ENCODE measurements at regions of chr22 and their contacts with region 1.

Region 1: GRCh38 chr22:37428649-37429586 is 1.6 kb upstream of the ELFN2 start:
- DNase-seq: peak; percentile 33 to 78 (median 60)
- ATAC-seq: peak; percentile 64 to 74
- H3K4me3 Mint-ChIP-seq: peak overlapping the region; percentile 17 to 63 (median 53)
- H3K27ac Mint-ChIP-seq: peak overlapping the region in 2 of 10 donors; percentile 19 to 28
- H3K4me1 Mint-ChIP-seq: peaks cover 11 to 32% (median 25%) of the 10 kb centered on the region in 4 donors
- H3K27me3 Mint-ChIP-seq: peaks cover 25 to 63% (median 48%) of the 10 kb centered on the region in 5 donors

Region 2: DNA sequence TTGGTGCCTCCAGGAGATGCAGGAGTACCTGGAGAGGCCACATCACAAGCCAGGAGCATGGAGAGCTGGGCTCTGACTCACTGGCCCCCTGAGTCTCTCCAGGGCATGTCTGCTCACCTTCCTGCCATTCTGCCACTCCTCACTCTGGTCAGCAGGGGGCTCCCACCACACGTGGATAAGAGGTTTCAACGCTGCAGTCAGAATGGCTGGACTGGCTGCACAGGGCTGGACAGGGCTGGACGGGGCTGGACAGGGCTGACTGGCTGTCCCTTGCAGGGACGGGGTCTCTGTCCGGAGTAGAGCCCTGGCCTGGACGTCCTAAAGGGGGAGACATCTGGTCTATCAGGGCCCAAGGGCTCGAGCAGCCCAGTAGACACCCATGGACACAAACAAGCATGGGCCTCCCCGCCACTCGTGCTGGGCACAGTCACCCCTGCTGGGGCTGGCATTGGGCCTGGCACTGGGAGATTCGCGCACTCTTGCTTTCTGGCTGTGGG is 112.0 kb before region 1 on chr22:
- POLR2A ChIA-PET with region 1: interaction called, 18 read pairs
- DNase-seq: peak; percentile 52 to 83 (median 66)
- ATAC-seq: peak; percentile 66 to 74
- H3K4me3 Mint-ChIP-seq: peak overlapping the region in 1 of 10 donors; percentile 34
- H3K27ac Mint-ChIP-seq: peak overlapping the region in 4 of 10 donors; percentile 34 to 73 (median 52)
- H3K4me1 Mint-ChIP-seq: peaks cover 20 to 60% (median 51%) of the 10 kb centered on the region in 4 donors
- H3K27me3 Mint-ChIP-seq: peaks cover 0 to 2% (median 0%) of the 10 kb centered on the region in 5 donors